RWPE1 (cell line): ENCODE measurements at regions of chr2 and their contacts with region 1.

Region 1: DNA sequence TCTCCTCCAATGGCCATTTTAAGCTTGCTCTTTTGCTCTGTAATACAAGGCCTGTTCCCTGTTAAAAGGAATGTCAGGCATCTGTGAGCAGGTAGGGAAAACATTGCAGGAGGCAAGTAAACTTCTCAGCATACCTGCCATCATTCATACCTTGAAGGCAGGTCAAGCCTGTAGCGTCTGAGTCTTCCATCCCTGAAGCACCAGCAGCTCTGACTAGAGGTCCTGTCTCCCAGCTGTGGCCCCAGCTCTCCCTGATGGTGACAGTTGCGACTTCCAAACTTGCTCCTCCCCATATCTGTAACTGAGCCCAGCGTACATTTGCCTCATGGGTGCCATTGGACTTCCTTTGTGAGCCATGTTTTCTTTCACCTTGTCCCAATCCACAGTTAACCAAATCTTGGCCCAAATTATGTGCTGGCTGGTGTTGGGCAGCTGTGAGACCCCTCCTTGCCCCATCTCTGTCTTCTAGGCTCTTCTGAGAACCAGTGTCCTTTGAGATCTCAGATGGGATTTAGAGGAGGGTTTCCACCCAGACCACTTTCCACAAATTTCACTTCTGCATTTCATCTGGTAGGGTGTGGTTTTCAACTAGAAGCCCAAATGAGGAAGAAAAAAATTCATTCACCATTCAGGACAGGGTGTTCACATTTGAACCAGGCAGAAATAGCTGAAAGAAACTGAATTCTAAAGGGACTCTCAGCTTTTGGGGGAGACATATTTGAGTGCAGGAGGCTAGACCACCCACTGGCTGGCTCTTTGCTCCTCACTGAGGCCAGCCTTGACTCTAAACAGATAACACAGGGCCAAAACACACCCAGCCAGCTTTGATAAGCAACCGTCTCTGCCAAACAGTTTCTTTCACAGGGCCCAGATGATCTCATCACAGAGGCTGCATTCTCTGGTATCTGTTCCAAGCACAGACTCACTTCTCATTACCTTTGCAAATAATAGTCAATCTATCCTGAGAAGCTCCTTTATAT is 66.4 kb upstream of the MSH2 start:
- DNase-seq: no peak
- H3K27ac ChIP-seq: no peak overlapping the region
- CTCF ChIP-seq: no peak

Region 2: GRCh38 chr2:47250630-47251403 is 85.7 kb before region 1 on chr2:
- CTCF ChIA-PET with region 1: no interaction called
- POLR2A ChIA-PET with region 1: no interaction called
- DNase-seq: peak; percentile 23
- H3K27ac ChIP-seq: no peak overlapping the region
- CTCF ChIP-seq: no peak

Region 3: GRCh38 chr2:47309952-47310800 is 26.4 kb before region 1 on chr2:
- CTCF ChIA-PET with region 1: no interaction called
- POLR2A ChIA-PET with region 1: no interaction called
- DNase-seq: no peak
- H3K27ac ChIP-seq: no peak overlapping the region
- CTCF ChIP-seq: no peak

Region 4: DNA sequence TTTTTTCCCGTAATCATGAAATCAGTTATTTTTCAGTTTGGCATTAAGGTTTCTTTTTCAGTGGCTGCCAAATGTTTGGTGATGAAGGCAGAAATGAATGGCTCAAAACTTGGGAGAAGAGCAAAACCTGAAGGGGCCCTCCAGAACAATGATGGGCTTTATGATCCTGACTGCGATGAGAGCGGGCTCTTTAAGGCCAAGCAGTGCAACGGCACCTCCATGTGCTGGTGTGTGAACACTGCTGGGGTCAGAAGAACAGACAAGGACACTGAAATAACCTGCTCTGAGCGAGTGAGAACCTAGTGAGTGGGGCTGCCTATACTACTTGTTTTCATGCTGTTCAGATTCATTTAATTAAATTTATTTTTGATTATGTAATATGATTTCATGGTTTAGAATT is 37.2 kb after region 1 on chr2:
- CTCF ChIA-PET with region 1: interaction called, 28 read pairs
- POLR2A ChIA-PET with region 1: no interaction called
- DNase-seq: no peak
- H3K27ac ChIP-seq: no peak overlapping the region
- CTCF ChIP-seq: no peak

Region 5: GRCh38 chr2:47388888-47389287 is 52.3 kb after region 1 on chr2:
- CTCF ChIA-PET with region 1: interaction called, 23 read pairs
- POLR2A ChIA-PET with region 1: interaction called, 4 read pairs
- DNase-seq: no peak
- H3K27ac ChIP-seq: no peak overlapping the region
- CTCF ChIP-seq: no peak

Region 6: DNA sequence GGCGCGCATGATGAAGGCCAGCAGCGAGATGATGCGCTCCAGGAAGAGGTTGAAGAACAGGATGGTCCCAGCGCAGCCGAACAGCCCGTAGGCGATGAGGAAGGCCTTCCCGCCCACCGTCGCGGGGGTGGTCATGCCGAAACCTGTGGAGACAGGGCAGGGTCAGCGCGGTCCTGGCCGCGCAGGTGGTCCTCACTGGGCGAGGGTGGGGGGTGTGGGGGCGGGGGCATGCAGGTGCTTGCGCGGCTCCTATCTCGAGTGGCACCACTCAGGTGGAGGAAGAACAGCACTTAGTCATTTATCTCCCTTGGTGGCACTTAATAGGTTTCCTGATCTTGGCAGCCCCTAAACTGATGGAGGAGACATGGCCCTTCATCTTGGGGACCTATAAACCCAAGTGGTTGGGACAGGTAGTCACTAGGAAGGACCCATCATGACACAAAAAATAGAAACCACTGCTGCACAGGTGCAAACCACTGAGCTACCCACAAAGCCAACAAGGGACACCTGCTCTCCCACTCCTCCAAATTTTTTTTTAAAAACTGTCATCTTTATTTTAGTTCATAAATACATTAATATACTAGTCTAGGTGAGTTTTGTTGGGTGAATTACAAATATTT is 185.2 kb after region 1 on chr2:
- CTCF ChIA-PET with region 1: no interaction called
- POLR2A ChIA-PET with region 1: no interaction called
- DNase-seq: no peak
- H3K27ac ChIP-seq: no peak overlapping the region
- CTCF ChIP-seq: no peak